ENCODE measurements at regions of chr1 and their contacts with region 1.

Region 1: DNA sequence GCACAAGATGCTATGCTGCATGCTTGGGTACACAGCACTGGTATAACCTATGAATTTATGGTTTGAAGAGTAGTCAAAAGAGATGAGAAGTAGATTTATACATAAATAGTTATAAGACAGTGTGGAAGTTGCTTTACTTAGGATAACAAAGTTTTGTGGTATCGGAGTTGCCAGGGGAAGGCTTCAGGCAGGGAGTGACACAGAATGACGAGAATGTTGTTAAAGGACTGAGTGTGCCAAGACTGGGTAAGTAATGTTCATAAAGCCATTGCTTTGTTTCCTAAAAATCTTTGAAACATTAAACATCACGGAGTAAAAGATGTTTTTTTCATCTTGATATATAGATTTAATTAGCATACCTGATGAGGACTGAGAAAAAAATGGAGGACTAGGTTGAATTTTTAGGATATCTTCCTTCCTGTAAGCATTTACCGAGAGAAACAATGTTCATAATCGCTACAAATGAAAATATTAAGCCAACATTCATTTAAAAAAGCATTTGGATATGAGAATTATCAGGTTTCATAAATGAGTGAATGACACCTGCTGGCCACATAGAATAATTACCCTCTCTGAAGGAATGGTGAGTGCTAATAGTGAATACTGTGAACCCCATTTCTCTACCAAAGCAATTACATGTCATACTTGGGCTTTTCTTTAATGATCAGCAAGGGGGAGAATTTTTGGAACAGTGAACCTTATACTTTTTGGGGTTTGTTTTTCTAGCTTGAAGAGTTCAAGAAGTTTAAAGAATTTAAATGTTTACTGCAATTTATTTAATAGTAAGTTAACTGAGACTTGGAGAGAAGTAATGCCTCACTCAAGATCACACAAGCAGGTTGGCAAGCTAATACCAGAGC is 28.4 kb downstream of the EXTL2 start:
- DNase-seq: no peak
- ATAC-seq: peak; percentile 77

Region 2: GRCh38 chr1:99808391-99809115 is 1057.7 kb before region 1 on chr1:
- intact Hi-C with region 1: loop called (anchors 5 kb)
- DNase-seq: no peak
- ATAC-seq: peak; percentile 94

Region 3: GRCh38 chr1:100459358-100460114 is 406.7 kb before region 1 on chr1:
- intact Hi-C with region 1: loop called (anchors 5 kb)
- DNase-seq: peak; percentile 78
- ATAC-seq: peak; percentile 90

Region 4: GRCh38 chr1:100606438-100606837 is 259.8 kb before region 1 on chr1:
- intact Hi-C with region 1: loop called (anchors 5 kb)
- DNase-seq: peak; percentile 47
- ATAC-seq: peak; percentile 82

Region 5: GRCh38 chr1:100811808-100812207 is 54.5 kb before region 1 on chr1:
- intact Hi-C with region 1: no loop called
- DNase-seq: no peak
- ATAC-seq: no peak